AG04450 (cell line): ENCODE measurements at regions of chr15 and their contacts with region 1.

Region 1: GRCh38 chr15:75532413-75533147 is 46.5 kb downstream of the PTPN9 start:
- DNase-seq: peak; percentile 70
- H3K4me3 ChIP-seq: no peak overlapping the region
- H3K27ac ChIP-seq: peak overlapping the region; percentile 21
- H3K27me3 ChIP-seq: no peaks in the 10 kb centered on the region
- CTCF ChIP-seq: peak; percentile 38

Region 2: GRCh38 chr15:75544359-75544758 is 11.8 kb after region 1 on chr15:
- CTCF ChIA-PET with region 1: interaction called, 13 read pairs
- POLR2A ChIA-PET with region 1: no interaction called
- DNase-seq: no peak
- H3K4me3 ChIP-seq: no peak overlapping the region
- H3K27ac ChIP-seq: no peak overlapping the region
- H3K27me3 ChIP-seq: no peaks in the 10 kb centered on the region
- CTCF ChIP-seq: no peak

Region 3: GRCh38 chr15:75809986-75810750 is 277.6 kb after region 1 on chr15:
- CTCF ChIA-PET with region 1: no interaction called
- POLR2A ChIA-PET with region 1: no interaction called
- DNase-seq: no peak
- H3K4me3 ChIP-seq: no peak overlapping the region
- H3K27ac ChIP-seq: no peak overlapping the region
- H3K27me3 ChIP-seq: peaks cover 19% of the 10 kb centered on the region
- CTCF ChIP-seq: peak; percentile 44